T-cell (primary cell): ENCODE measurements at regions of chr1 and their contacts with region 1.

Region 1: DNA sequence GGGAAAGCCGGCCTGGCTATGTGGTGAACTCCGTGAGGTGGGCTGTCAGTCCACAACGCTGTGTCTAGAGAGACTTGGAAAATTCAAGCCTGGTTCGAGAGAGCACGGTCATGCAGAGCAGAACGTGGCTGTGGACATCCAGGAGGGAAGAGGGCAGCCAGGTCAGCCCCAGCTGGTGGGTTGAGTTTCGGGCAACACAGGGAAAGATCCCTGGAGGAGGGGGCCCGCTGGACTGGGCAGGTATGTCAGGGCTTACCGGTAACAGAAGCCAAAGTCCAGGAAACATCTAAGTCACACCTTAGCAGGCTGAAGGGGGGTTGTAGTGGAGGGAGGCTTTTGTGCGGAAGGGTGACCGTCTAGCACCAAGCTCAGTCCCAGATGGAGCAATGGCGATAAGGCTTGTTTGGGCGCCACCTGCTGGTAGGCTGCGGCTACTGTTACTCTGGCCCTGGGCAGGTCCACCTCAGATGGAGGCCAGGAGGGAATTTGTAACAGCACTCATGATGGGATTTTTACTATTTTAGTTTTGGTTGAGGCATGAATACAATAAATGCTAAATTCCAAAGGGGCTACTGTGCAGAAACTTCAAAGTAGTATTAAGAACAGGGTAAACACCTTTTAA is 143.3 kb upstream of the ZNF644 start:
- DNase-seq: peak in 33 of 35 experiments; percentile 19 to 74 (median 51)
- ATAC-seq: peak; percentile 66 to 78 (median 70)
- H3K4me3 ChIP-seq: no peak overlapping the region
- H3K4me3 Mint-ChIP-seq: no peak overlapping the region
- H3K27ac ChIP-seq: no peak overlapping the region
- H3K27ac Mint-ChIP-seq: no peak overlapping the region
- H3K4me1 ChIP-seq: peaks cover 0 to 3% of the 10 kb centered on the region in 2 experiments
- H3K4me1 Mint-ChIP-seq: peaks cover 0 to 9% (median 3%) of the 10 kb centered on the region in 3 donors
- H3K27me3 ChIP-seq: peaks cover 0 to 12% of the 10 kb centered on the region in 2 experiments
- H3K27me3 Mint-ChIP-seq: peaks cover 0 to 2% of the 10 kb centered on the region in 2 donors

Region 2: GRCh38 chr1:89198491-89199072 is 1966.6 kb before region 1 on chr1 and contains the start of gene GBP4:
- CTCF ChIA-PET with region 1: no interaction called
- POLR2A ChIA-PET with region 1: no interaction called
- DNase-seq: peak in 34 of 35 experiments; percentile 15 to 75 (median 36)
- ATAC-seq: peak; percentile 63 to 85 (median 80)
- H3K4me3 ChIP-seq: peak within 1 kb of the TSS; percentile 72 to 75
- H3K4me3 Mint-ChIP-seq: peak within 1 kb of the TSS; percentile 94 to 98 (median 95)
- H3K27ac ChIP-seq: peak within 1 kb of the TSS; percentile 83
- H3K27ac Mint-ChIP-seq: peak within 1 kb of the TSS; percentile 97 to 99
- H3K4me1 ChIP-seq: peaks cover 16 to 23% of the 10 kb centered on the region in 2 experiments
- H3K4me1 Mint-ChIP-seq: peaks cover 74 to 93% (median 76%) of the 10 kb centered on the region in 3 donors
- H3K27me3 ChIP-seq: no peaks in the 10 kb centered on the region
- H3K27me3 Mint-ChIP-seq: no peaks in the 10 kb centered on the region
- total RNA-seq, gene GBP4: 24.7 to 61.3 (median 36.5) TPM

Region 3: DNA sequence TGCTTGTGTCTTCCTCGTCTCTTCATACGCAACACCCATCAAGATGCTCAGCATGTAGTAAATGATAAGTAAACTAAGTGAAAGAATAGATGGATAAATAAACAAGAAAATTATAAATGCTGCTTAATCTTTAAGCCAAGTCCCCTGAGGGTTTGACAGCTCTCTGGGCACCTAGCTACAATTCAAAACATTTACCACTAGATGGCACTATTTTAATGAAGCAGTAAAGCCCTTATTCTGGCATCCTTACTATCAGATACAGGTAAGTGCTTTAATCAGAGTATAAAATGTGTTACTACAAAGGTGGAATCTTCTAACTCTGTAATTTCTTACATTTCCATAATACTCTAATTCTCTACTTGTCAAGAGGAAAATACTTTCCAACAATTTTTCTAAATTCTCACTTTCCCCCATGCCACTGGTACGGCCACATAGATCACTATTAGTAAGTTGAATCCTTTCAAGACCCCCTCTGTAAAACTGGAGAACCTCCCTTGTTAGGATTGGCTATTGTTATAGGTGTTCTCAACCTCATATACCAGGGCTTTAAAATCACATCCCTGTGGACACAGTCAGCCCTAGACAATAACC is 585.8 kb before region 1 on chr1:
- CTCF ChIA-PET with region 1: interaction called, 7 to 14 read pairs
- POLR2A ChIA-PET with region 1: no interaction called
- DNase-seq: peak in 2 of 35 experiments; percentile 2 to 49
- ATAC-seq: peak in 1 of 4 experiments; percentile 37
- H3K4me3 ChIP-seq: no peak overlapping the region
- H3K4me3 Mint-ChIP-seq: no peak overlapping the region
- H3K27ac ChIP-seq: no peak overlapping the region
- H3K27ac Mint-ChIP-seq: no peak overlapping the region
- H3K4me1 ChIP-seq: no peaks in the 10 kb centered on the region
- H3K4me1 Mint-ChIP-seq: no peaks in the 10 kb centered on the region
- H3K27me3 ChIP-seq: no peaks in the 10 kb centered on the region
- H3K27me3 Mint-ChIP-seq: peaks cover 3 to 12% of the 10 kb centered on the region in 2 donors

Region 4: GRCh38 chr1:90721210-90722194 is 443.6 kb before region 1 on chr1:
- CTCF ChIA-PET with region 1: interaction called in 1 of 2 experiments, 11 read pairs
- POLR2A ChIA-PET with region 1: no interaction called
- DNase-seq: peak in 15 of 35 experiments; percentile 25 to 66 (median 30)
- ATAC-seq: peak in 2 of 4 experiments; percentile 32 to 40
- H3K4me3 ChIP-seq: no peak overlapping the region
- H3K4me3 Mint-ChIP-seq: no peak overlapping the region
- H3K27ac ChIP-seq: no peak overlapping the region
- H3K27ac Mint-ChIP-seq: no peak overlapping the region
- H3K4me1 ChIP-seq: peaks cover 2 to 62% of the 10 kb centered on the region in 2 experiments
- H3K4me1 Mint-ChIP-seq: peaks cover 50 to 71% (median 57%) of the 10 kb centered on the region in 3 donors
- H3K27me3 ChIP-seq: peaks cover 13 to 80% of the 10 kb centered on the region in 2 experiments
- H3K27me3 Mint-ChIP-seq: peaks cover 77 to 88% of the 10 kb centered on the region in 2 donors

Region 5: GRCh38 chr1:91018006-91018405 is 147.1 kb before region 1 on chr1:
- CTCF ChIA-PET with region 1: interaction called in 1 of 2 experiments, 15 read pairs
- POLR2A ChIA-PET with region 1: interaction called in 1 of 2 experiments, 3 read pairs
- DNase-seq: peak in 1 of 35 experiments; percentile 49
- ATAC-seq: no peak
- H3K4me3 ChIP-seq: no peak overlapping the region
- H3K4me3 Mint-ChIP-seq: peak overlapping the region; percentile 47 to 93 (median 89)
- H3K27ac ChIP-seq: no peak overlapping the region
- H3K27ac Mint-ChIP-seq: peak overlapping the region; percentile 13 to 26
- H3K4me1 ChIP-seq: peaks cover 32 to 43% of the 10 kb centered on the region in 2 experiments
- H3K4me1 Mint-ChIP-seq: peaks cover 80 to 83% (median 81%) of the 10 kb centered on the region in 3 donors
- H3K27me3 ChIP-seq: no peaks in the 10 kb centered on the region
- H3K27me3 Mint-ChIP-seq: no peaks in the 10 kb centered on the region